ENCODE measurements at regions of chr13 and their contacts with region 1.

Region 1: DNA sequence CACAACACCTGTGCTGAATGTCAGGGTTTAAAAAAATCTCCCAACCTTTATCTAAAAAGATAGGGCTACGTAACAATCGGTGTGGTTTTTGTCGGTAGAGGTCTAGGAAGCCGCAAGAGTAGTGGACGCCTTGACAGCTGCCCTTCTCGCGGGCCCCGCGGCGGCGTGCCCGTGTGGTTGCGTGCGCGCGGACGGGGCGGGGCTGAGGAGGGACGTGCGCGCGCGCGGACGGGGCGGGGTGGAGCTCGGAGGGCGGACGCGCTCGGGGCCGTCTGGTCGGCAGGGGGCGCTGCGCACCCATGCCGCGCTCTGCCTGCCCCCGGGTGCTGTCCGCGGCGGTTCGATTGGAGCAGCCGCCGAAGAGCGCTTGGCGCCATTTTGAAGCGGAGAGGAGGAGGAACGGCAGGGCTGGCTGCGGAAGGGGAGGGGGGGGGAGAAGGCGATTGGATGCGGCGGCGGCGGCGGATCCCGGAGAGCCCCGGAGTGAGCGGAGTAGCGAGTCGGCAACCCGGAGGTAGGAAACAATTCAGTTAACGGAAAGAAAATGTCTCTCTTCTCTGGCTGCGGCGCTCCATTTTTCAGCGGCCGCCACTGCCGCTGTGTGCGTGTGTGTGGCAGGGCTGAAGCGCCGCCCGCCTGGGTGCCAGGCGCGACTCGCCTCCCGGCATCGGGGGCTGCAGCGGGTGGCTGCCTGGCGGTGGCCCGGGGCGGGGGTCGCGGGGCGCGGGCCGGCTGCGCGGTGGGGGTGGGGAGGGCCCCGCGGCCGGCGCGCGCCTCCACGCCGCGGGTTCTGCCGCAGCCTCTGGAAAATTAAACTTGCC is at the start of gene PDS5B:
- DNase-seq: peak; percentile 98
- H3K4me3 ChIP-seq: peak within 1 kb of the TSS; percentile 77
- H3K27ac ChIP-seq: peak within 1 kb of the TSS; percentile 91
- H3K4me1 ChIP-seq: peaks cover 8% of the 10 kb centered on the region
- H3K27me3 ChIP-seq: no peaks in the 10 kb centered on the region
- CTCF ChIP-seq: peak; percentile 66
- total RNA-seq, gene PDS5B: 94.7 and 95.5 TPM in 2 replicates

Region 2: GRCh38 chr13:32609428-32609827 is 23.1 kb after region 1 on chr13:
- CTCF ChIA-PET with region 1: interaction called, 10 read pairs
- POLR2A ChIA-PET with region 1: no interaction called
- intact Hi-C with region 1: no loop called
- DNase-seq: no peak
- H3K4me3 ChIP-seq: no peak overlapping the region
- H3K27ac ChIP-seq: no peak overlapping the region
- H3K4me1 ChIP-seq: no peaks in the 10 kb centered on the region
- H3K27me3 ChIP-seq: no peaks in the 10 kb centered on the region
- CTCF ChIP-seq: no peak

Region 3: GRCh38 chr13:32639502-32640105 is 53.3 kb after region 1 on chr13:
- CTCF ChIA-PET with region 1: interaction called, 6 read pairs
- POLR2A ChIA-PET with region 1: interaction called, 3 read pairs
- intact Hi-C with region 1: loop called (anchors 1 kb)
- DNase-seq: peak; percentile 80
- H3K4me3 ChIP-seq: no peak overlapping the region
- H3K27ac ChIP-seq: no peak overlapping the region
- H3K4me1 ChIP-seq: peaks cover 30% of the 10 kb centered on the region
- H3K27me3 ChIP-seq: no peaks in the 10 kb centered on the region
- CTCF ChIP-seq: peak; percentile 90

Region 4: GRCh38 chr13:32911506-32911905 is 325.2 kb after region 1 on chr13:
- CTCF ChIA-PET with region 1: no interaction called
- POLR2A ChIA-PET with region 1: no interaction called
- intact Hi-C with region 1: loop called (anchors 2 kb)
- DNase-seq: peak; percentile 70
- H3K4me3 ChIP-seq: no peak overlapping the region
- H3K27ac ChIP-seq: no peak overlapping the region
- H3K4me1 ChIP-seq: no peaks in the 10 kb centered on the region
- H3K27me3 ChIP-seq: no peaks in the 10 kb centered on the region
- CTCF ChIP-seq: peak; percentile 75

Region 5: GRCh38 chr13:33174931-33175330 is 588.6 kb after region 1 on chr13:
- CTCF ChIA-PET with region 1: no interaction called
- POLR2A ChIA-PET with region 1: no interaction called
- intact Hi-C with region 1: loop called (anchors 10 kb)
- DNase-seq: no peak
- H3K4me3 ChIP-seq: no peak overlapping the region
- H3K27ac ChIP-seq: peak overlapping the region; percentile 96
- H3K4me1 ChIP-seq: peaks cover 89% of the 10 kb centered on the region
- H3K27me3 ChIP-seq: no peaks in the 10 kb centered on the region
- CTCF ChIP-seq: no peak

Region 6: GRCh38 chr13:33723772-33724435 is 1137.6 kb after region 1 on chr13:
- CTCF ChIA-PET with region 1: interaction called, 4 read pairs
- POLR2A ChIA-PET with region 1: no interaction called
- intact Hi-C with region 1: loop called (anchors 5 kb)
- DNase-seq: peak; percentile 90
- H3K4me3 ChIP-seq: no peak overlapping the region
- H3K27ac ChIP-seq: no peak overlapping the region
- H3K4me1 ChIP-seq: peaks cover 26% of the 10 kb centered on the region
- H3K27me3 ChIP-seq: no peaks in the 10 kb centered on the region
- CTCF ChIP-seq: peak; percentile 89